ENCODE measurements at regions of chr14 and their contacts with region 1.

Region 1: GRCh38 chr14:53306267-53306721 is 153.2 kb upstream of the DDHD1 start:
- DNase-seq: peak in 1 of 2 experiments; percentile 31
- H3K4me3 ChIP-seq: no peak overlapping the region
- H3K27ac ChIP-seq: no peak overlapping the region
- H3K4me1 ChIP-seq: no peaks in the 10 kb centered on the region
- H3K27me3 ChIP-seq: no peaks in the 10 kb centered on the region
- CTCF ChIP-seq: peak; percentile 83

Region 2: DNA sequence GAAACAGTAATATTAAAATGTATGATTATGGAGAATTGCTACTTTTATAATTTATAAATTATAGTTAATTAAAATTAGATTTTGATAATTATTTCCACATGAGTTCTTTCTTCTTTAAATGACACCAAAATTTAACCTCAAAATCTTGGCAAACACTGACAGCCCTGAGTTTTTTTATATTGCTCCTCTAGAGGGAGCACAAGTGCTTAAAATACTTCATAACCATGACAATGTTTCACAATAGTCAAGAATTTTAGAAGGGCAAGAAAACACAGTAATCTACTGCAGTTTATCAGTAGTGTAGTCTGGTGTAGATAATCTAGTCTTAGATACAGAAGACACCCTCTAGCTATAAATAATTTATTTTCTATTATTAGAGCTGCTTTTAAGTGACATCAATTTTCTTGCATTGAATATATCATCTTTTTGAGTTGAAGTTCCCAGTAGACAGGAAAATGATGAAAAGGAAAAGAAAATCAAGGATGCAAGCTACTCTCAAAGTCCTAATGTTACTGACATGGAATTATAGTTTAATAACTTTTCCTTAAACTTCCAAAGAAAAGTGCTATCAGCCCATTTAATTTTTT is 1006.5 kb before region 1 on chr14:
- CTCF ChIA-PET with region 1: no interaction called
- POLR2A ChIA-PET with region 1: no interaction called
- intact Hi-C with region 1: loop called (anchors 10 kb)
- DNase-seq: peak in 1 of 2 experiments; percentile 58
- H3K4me3 ChIP-seq: no peak overlapping the region
- H3K27ac ChIP-seq: no peak overlapping the region
- H3K4me1 ChIP-seq: no peaks in the 10 kb centered on the region
- H3K27me3 ChIP-seq: no peaks in the 10 kb centered on the region
- CTCF ChIP-seq: peak; percentile 86

Region 3: GRCh38 chr14:52824507-52824906 is 481.8 kb before region 1 on chr14:
- CTCF ChIA-PET with region 1: no interaction called
- POLR2A ChIA-PET with region 1: no interaction called
- intact Hi-C with region 1: loop called (anchors 2 kb)
- DNase-seq: no peak
- H3K4me3 ChIP-seq: no peak overlapping the region
- H3K27ac ChIP-seq: no peak overlapping the region
- H3K4me1 ChIP-seq: no peaks in the 10 kb centered on the region
- H3K27me3 ChIP-seq: no peaks in the 10 kb centered on the region
- CTCF ChIP-seq: no peak

Region 4: GRCh38 chr14:53152890-53153701 is 153.2 kb before region 1 on chr14 and contains the start of gene DDHD1:
- CTCF ChIA-PET with region 1: no interaction called
- POLR2A ChIA-PET with region 1: no interaction called
- intact Hi-C with region 1: loop called (anchors 5 kb)
- DNase-seq: peak in 1 of 2 experiments; percentile 77
- H3K4me3 ChIP-seq: peak within 1 kb of the TSS; percentile 96
- H3K27ac ChIP-seq: no peak within 1 kb of the TSS
- H3K4me1 ChIP-seq: peaks cover 14% of the 10 kb centered on the region
- H3K27me3 ChIP-seq: no peaks in the 10 kb centered on the region
- CTCF ChIP-seq: no peak
- total RNA-seq, gene DDHD1: 11.1 and 11.3 TPM in 2 replicates

Region 5: GRCh38 chr14:53355581-53356112 is 49.4 kb after region 1 on chr14:
- CTCF ChIA-PET with region 1: interaction called, 18 read pairs
- POLR2A ChIA-PET with region 1: no interaction called
- intact Hi-C with region 1: no loop called
- DNase-seq: peak; percentile 25 to 37
- H3K4me3 ChIP-seq: no peak overlapping the region
- H3K27ac ChIP-seq: no peak overlapping the region
- H3K4me1 ChIP-seq: 0 out of 2 replicates have a peak, but pooled peaks cover 5% of the 10 kb centered on the region
- H3K27me3 ChIP-seq: no peaks in the 10 kb centered on the region
- CTCF ChIP-seq: no peak

Measured in PC-9 (cell line).